Mucosa of descending colon (tissue), 3 donors: ENCODE measurements at regions of chr16 and their contacts with region 1.

Region 1: GRCh38 chr16:89749647-89750046 is 28.3 kb downstream of the ZNF276 start:
- DNase-seq: peak; percentile 72 to 78 (median 73)
- ATAC-seq: peak; percentile 97
- H3K4me3 ChIP-seq: no peak overlapping the region
- H3K4me1 ChIP-seq: no peaks in the 10 kb centered on the region
- CTCF ChIP-seq: no peak

Region 2: GRCh38 chr16:89843409-89844350 is 94.0 kb after region 1 on chr16:
- intact Hi-C with region 1: no loop called
- DNase-seq: no peak
- ATAC-seq: no peak
- H3K4me3 ChIP-seq: no peak overlapping the region
- H3K4me1 ChIP-seq: peaks cover 14% of the 10 kb centered on the region
- CTCF ChIP-seq: no peak

Region 3: DNA sequence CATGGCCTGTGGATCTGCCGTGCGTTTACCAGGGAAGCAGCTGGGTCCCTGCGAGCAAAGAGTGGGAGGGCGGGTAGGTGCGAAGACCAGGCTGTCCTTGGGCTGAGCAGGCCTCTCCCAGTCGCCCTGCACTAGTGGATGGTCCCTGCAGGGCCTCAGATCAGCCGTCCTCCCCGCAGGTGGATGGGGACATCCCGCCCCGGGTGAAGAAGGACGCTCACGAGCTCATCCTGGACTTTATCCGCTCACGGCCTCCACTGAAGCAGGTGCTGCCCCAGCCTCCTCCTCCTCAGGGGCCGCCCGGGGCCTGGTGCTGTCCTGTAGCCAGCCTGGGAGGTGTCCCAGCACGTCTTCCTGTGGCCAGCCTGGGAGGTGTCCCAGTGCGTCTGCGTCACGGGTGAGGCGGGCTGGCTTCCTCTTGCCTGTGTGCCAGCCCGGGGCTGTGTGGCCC is 105.8 kb after region 1 on chr16:
- intact Hi-C with region 1: loop called (anchors 5 to 10 kb)
- DNase-seq: no peak
- ATAC-seq: no peak
- H3K4me3 ChIP-seq: no peak overlapping the region
- H3K4me1 ChIP-seq: peaks cover 12% of the 10 kb centered on the region
- CTCF ChIP-seq: no peak

Region 4: GRCh38 chr16:89860747-89861304 is 111.2 kb after region 1 on chr16:
- intact Hi-C with region 1: loop called (anchors 5 to 10 kb)
- DNase-seq: peak; percentile 79 to 85 (median 80)
- ATAC-seq: peak; percentile 88
- H3K4me3 ChIP-seq: no peak overlapping the region
- H3K4me1 ChIP-seq: peaks cover 7% of the 10 kb centered on the region
- CTCF ChIP-seq: peak; percentile 97